ENCODE measurements at regions of chr22 and their contacts with region 1.

Region 1: DNA sequence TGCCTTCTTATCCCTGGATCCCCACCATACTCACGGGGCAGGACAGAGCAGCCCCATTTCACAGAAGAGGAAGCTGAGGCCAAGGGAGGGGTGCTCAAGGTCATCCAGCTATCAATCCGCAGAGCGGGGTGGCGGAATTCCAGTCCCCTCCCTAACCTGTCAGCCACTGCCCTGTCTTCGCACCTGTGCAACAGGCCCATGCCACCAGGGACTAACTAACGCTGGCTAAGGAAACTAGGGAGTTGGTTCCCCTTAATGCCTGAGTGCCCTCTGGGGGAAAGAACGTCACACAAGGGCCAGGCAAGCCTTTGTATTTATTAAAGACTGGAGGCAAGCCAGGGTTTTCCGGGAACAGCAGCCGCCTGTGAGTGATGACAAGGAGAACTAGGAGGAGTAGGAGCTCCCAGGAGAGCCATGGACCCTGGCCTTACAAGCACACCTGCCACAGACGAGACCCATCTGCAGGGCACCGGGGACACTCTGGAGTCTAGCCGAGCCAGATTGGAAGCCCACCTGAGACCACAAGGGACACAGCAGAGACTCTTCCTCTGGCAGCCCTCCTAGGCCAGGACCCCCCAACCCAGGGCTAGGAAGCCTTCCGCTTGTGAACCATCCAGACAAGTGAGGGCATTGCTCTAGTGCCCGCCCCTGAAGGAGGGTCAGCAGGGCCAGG is 64.4 kb downstream of the MYH9 start:
- DNase-seq: peak; percentile 97
- H3K4me3 ChIP-seq: no peak overlapping the region
- H3K27ac ChIP-seq: peak overlapping the region; percentile 96 to 100 (median 99)
- H3K4me1 ChIP-seq: peaks cover 0 to 100% (median 94%) of the 10 kb centered on the region in 4 donors
- H3K27me3 ChIP-seq: no peaks in the 10 kb centered on the region
- CTCF ChIP-seq: peak in 2 of 4 experiments; percentile 16 to 36
- EP300 ChIP-seq: peak in 3 of 4 donors; percentile 70 to 93 (median 86)
- POLR2A ChIP-seq: no peak

Region 2: DNA sequence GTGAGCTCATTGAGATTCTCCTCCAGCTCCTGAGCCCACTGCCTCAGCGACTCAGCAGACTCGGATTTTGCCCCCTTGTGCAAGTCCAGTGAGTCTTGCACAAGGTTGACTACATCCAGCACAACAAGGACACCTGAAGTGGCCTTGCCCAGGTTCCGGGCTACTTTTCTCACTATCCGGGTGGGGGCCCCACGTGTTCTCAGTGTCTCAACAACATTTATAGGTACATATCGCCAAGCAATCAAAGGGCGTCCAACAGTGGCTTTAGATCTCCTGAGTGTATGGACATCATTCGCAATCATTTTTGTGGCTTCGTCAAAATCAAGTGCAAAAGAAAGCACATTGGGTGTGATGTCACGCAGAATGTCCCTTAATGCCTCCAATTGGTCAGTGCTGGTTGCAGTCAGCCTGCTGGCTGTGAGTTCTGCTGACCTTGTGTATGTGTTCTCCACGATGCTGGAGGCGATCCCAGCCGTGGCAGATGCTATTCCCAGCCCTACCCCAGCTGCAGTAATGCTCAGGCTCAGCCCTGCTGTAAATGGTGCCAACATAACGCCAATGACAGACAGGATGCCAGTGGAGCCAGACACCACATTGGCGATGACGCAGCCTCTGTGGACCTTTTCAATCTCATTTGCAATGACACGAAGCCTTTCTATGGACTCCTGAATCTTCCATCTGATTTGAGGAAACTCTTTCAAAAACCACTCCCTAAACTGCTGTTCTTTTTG is 132.0 kb before region 1 on chr22:
- intact Hi-C with region 1: no loop called
- DNase-seq: peak; percentile 93
- H3K4me3 ChIP-seq: no peak overlapping the region
- H3K27ac ChIP-seq: peak overlapping the region; percentile 18 to 75 (median 59)
- H3K4me1 ChIP-seq: peaks cover 0 to 15% (median 0%) of the 10 kb centered on the region in 4 donors
- H3K27me3 ChIP-seq: no peaks in the 10 kb centered on the region
- CTCF ChIP-seq: no peak
- EP300 ChIP-seq: no peak
- POLR2A ChIP-seq: no peak

Region 3: DNA sequence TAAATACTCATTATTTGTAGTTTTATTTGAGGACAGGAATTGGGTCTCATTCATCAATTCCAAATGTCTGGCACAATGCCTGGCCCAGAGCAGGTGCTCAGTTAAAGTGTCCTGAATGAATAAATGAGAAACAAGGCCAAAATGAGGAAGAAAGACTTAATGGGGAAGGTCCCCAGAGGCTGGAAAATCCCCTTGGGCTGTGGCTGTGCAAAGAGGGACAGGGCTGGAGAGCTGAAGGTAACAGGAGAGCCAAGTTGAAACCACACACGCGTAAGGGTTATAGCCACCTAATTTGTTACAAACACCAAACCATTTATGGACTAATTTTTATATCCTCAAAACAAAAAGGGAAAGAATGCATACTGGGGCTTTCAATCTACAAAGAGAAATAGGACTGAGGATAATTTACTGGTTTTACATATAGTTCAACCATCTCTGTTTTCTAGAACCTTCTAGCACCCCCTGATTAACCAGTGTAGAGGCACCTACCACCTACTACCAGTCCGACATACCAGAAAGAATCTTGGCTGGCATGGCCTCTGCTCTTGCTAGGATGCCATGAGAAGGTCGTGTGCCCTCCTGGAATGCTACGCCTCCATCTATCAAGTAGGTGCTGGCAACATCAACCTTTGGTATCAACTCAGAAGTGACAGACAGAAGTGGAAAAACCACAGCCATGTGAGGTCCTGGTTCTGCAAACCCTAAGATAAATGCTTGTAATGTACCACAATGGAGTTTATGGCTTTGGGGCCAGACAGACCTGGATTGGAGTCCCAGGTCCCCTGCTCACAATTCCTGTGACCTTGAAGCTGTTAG is 36.1 kb after region 1 on chr22:
- intact Hi-C with region 1: loop called (anchors 5 kb)
- DNase-seq: no peak
- H3K4me3 ChIP-seq: no peak overlapping the region
- H3K27ac ChIP-seq: peak overlapping the region; percentile 98 to 100 (median 100)
- H3K4me1 ChIP-seq: peaks cover 0 to 100% (median 99%) of the 10 kb centered on the region in 4 donors
- H3K27me3 ChIP-seq: no peaks in the 10 kb centered on the region
- CTCF ChIP-seq: no peak
- EP300 ChIP-seq: no peak
- POLR2A ChIP-seq: no peak

Region 4: DNA sequence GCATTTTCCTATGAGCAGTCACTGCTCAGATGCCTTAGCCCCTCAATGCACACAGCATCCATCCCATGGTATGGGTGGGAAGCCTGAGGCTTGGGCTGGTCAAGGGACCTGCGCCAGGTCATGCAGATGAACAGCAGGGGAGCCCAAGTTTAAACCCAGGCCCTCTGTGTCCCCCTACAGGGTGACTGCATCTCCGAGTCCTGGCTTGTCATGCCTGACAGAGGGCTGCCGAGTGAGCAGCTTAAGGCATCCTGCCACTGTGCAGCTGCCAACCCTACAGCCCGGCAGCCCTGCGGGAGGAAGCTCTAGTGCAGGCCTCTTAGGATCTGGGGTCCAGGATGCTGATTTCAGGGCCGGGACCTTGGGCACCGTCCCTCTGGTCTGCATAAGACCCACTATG is 816.4 kb after region 1 on chr22:
- intact Hi-C with region 1: no loop called
- DNase-seq: no peak
- H3K4me3 ChIP-seq: no peak overlapping the region
- H3K27ac ChIP-seq: no peak overlapping the region
- H3K4me1 ChIP-seq: no peaks in the 10 kb centered on the region
- H3K27me3 ChIP-seq: peaks cover 0 to 14% (median 0%) of the 10 kb centered on the region in 3 donors
- CTCF ChIP-seq: no peak
- EP300 ChIP-seq: no peak
- POLR2A ChIP-seq: no peak

Measured in sigmoid colon (tissue), 7 donors.